A549 (cell line): ENCODE measurements at regions of chr1 and their contacts with region 1.

Region 1: GRCh38 chr1:152001391-152002249 is 8.0 kb upstream of the S100A10 start:
- DNase-seq: peak; percentile 66 to 89
- ATAC-seq: peak; percentile 66 to 70
- H3K4me3 ChIP-seq: no peak overlapping the region
- H3K27ac ChIP-seq: peak overlapping the region; percentile 72 to 83
- H3K4me1 ChIP-seq: peaks cover 52% of the 10 kb centered on the region
- CTCF ChIP-seq: peak; percentile 95
- EP300 ChIP-seq: no peak
- POLR2A ChIP-seq: no peak
- RAD21 ChIP-seq: peak; percentile 99

Region 2: DNA sequence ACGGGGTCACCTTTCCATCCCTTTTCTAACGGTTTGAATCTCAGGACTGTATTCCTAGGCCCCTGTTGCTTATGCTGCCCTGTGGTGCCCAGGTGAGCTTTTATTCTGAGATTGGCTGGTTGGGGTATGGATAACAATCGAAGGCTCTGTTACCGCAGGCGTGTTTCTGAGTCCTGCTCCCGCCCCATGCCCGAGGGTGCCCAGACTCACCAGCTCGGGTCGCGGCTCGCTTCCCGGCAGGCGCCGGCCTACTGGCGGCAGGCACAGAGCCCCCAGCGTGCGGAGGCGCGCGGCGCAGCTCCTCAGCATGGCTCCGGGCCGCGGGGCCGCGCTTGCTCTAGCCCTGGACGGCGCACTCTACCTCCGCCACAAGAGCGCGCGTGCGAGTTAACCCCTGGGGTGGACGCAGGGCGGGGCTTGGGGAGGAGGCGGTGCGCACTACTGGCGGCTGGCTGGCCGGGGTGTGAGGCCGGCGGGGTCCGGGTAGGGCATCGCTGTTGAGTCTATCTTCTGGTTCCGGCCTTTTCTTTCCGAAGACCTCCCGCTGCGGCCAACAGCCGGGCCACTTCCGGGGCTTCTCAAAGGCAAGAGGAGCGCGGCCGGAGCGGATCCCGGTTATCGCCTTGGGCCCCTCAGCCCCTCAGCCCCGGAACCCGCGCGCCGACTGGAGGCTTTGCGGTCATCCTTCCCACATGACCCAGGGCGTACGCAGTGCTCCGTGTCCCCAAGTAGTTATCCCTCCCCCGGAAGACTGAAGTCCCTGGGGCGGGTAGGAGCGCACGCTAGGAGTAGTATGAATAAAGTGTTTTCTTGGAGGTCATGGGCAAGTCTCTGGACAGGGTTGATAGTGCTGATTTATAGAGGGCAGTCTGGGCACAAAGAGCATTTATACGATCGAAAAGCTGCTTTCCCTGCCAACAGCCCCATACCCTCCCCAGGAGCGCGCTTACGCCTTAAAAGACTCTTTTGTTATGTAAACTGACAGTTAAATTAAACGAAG is 92.2 kb before region 1 on chr1 and contains the start of gene THEM4:
- CTCF ChIA-PET with region 1: interaction called, 31 read pairs
- POLR2A ChIA-PET with region 1: interaction called, 12 read pairs
- DNase-seq: peak; percentile 95 to 99
- ATAC-seq: peak; percentile 99
- H3K4me3 ChIP-seq: peak within 1 kb of the TSS; percentile 56
- H3K27ac ChIP-seq: peak within 1 kb of the TSS; percentile 88 to 92
- H3K4me1 ChIP-seq: no peaks in the 10 kb centered on the region
- CTCF ChIP-seq: peak; percentile 21
- EP300 ChIP-seq: no peak
- POLR2A ChIP-seq: peak; percentile 90
- RAD21 ChIP-seq: peak in 1 of 2 experiments; percentile 38; a peak in 1 of 5 replicates
- polyA plus RNA-seq, gene THEM4: 28.1 and 32.3 TPM in 2 replicates

Region 3: GRCh38 chr1:151945725-151946364 is 55.8 kb before region 1 on chr1:
- CTCF ChIA-PET with region 1: interaction called, 378 read pairs
- POLR2A ChIA-PET with region 1: no interaction called
- DNase-seq: peak; percentile 90 to 97
- ATAC-seq: peak; percentile 73 to 83
- H3K4me3 ChIP-seq: 0 out of 3 replicates have a peak overlapping the region, but pooled peaks have one; percentile 3
- H3K27ac ChIP-seq: peak overlapping the region; percentile 63 to 79
- H3K4me1 ChIP-seq: peaks cover 62% of the 10 kb centered on the region
- CTCF ChIP-seq: no peak
- EP300 ChIP-seq: no peak
- POLR2A ChIP-seq: no peak
- RAD21 ChIP-seq: 0 out of 5 replicates have a peak, but pooled peaks of 1 of the 2 experiments have one; percentile 6

Region 4: DNA sequence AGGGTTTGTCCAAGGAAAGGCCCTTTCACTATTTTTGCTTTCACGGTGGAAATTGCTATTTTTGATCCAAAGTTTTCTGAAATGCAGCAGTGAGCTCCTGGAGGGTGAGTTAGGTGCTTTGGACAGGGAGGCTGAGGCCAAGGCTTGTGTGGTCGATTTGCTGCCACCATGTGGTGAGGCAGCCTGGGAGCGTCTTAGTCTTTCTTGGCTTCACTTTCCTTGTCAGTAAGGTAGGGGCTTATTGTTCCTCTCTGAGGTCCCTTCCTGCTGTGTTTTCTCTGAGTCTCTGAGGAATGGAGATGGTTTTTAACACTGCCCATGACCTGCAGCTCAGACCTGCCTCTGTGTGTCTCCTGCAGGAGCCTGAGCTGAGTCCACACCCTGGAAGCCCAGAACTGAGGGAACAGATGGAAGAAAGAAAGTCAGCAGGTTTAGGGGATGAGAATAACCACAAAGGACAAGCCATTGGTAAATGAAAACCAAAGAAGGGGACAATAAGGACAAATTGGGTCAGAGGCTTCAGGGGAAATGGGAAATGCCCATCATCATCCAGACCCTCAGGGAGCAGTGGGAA is 12.1 kb after region 1 on chr1:
- CTCF ChIA-PET with region 1: interaction called, 169 read pairs
- POLR2A ChIA-PET with region 1: interaction called, 3 read pairs
- DNase-seq: peak in 1 of 2 experiments; percentile 72
- ATAC-seq: peak; percentile 83 to 91; a peak in 5 of 6 replicates
- H3K4me3 ChIP-seq: no peak overlapping the region
- H3K27ac ChIP-seq: 0 out of 6 replicates have a peak overlapping the region, but pooled peaks of 1 of the 2 experiments have one; percentile 32
- H3K4me1 ChIP-seq: no peaks in the 10 kb centered on the region
- CTCF ChIP-seq: peak; percentile 70
- EP300 ChIP-seq: no peak
- POLR2A ChIP-seq: no peak
- RAD21 ChIP-seq: peak; percentile 63 to 73

Region 5: DNA sequence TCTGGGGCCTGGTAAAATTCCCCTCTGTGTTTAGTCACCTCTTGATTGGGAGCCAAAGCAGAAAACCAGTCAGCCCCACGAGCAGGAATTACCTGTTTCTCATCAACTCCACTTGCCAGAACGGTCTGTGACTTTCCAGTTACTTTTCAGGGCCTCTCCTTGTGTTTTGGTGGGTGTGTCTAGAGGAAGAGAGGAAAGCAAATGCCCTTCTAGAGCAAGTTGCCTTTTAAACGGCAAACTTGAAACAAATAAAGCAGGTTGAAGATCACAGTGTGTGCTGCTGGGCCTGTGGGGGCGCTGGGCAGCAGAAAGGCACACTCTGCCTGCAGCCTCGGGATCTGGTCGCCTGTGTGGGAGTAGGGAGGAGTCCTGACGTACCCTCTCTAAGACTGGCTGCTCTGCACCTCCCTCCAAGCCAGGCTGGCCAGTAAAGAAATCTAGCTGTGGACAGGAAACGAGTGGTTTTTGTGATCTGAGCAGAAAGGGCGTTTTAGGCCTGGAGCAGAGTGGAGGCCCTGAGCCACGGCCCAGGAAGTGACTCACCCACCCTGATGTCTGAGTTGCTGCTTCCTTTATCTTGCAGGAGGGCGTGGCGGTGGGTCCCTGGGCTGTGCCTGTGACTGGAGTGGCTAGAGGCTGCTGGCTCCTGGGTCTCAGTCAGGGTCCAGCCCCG is 46.2 kb after region 1 on chr1:
- CTCF ChIA-PET with region 1: interaction called, 18 read pairs
- POLR2A ChIA-PET with region 1: interaction called, 6 read pairs
- DNase-seq: peak; percentile 83 to 100
- ATAC-seq: peak; percentile 95
- H3K4me3 ChIP-seq: peak overlapping the region; percentile 43
- H3K27ac ChIP-seq: peak overlapping the region; percentile 95 to 96
- H3K4me1 ChIP-seq: peaks cover 45% of the 10 kb centered on the region
- CTCF ChIP-seq: peak; percentile 57; the same call in 2 of the 3 replicates
- EP300 ChIP-seq: no peak; a peak in 1 of 5 replicates
- POLR2A ChIP-seq: peak; percentile 66
- RAD21 ChIP-seq: peak; percentile 32 to 45; a peak in 4 of 5 replicates

Region 6: GRCh38 chr1:152227310-152227928 is 225.8 kb after region 1 on chr1:
- CTCF ChIA-PET with region 1: no interaction called
- POLR2A ChIA-PET with region 1: no interaction called
- DNase-seq: peak in 1 of 2 experiments; percentile 24
- ATAC-seq: no peak
- H3K4me3 ChIP-seq: no peak overlapping the region
- H3K27ac ChIP-seq: no peak overlapping the region
- H3K4me1 ChIP-seq: no peaks in the 10 kb centered on the region
- CTCF ChIP-seq: peak; percentile 25; the same call in 2 of the 3 replicates
- EP300 ChIP-seq: no peak
- POLR2A ChIP-seq: no peak
- RAD21 ChIP-seq: peak; percentile 38 to 39; a peak in 4 of 5 replicates